Activated naive CD4-positive, alpha-beta T cell treated with anti-CD3 and anti-CD28 coated beads for 36 hours (primary cell): ENCODE measurements at regions of chr2 and their contacts with region 1.

Region 1: GRCh38 chr2:203453858-203454451 is 81.1 kb downstream of the RAPH1 start:
- DNase-seq: peak; percentile 54
- H3K4me3 Mint-ChIP-seq: no peak overlapping the region
- H3K27ac Mint-ChIP-seq: no peak overlapping the region
- H3K4me1 Mint-ChIP-seq: peaks cover 2% of the 10 kb centered on the region
- H3K27me3 Mint-ChIP-seq: no peaks in the 10 kb centered on the region

Region 2: GRCh38 chr2:202577250-202578183 is 876.4 kb before region 1 on chr2:
- CTCF ChIA-PET with region 1: no interaction called
- intact Hi-C with region 1: loop called (anchors 1 kb)
- DNase-seq: no peak
- H3K4me3 Mint-ChIP-seq: no peak overlapping the region
- H3K27ac Mint-ChIP-seq: no peak overlapping the region
- H3K4me1 Mint-ChIP-seq: peaks cover 2% of the 10 kb centered on the region
- H3K27me3 Mint-ChIP-seq: no peaks in the 10 kb centered on the region

Region 3: DNA sequence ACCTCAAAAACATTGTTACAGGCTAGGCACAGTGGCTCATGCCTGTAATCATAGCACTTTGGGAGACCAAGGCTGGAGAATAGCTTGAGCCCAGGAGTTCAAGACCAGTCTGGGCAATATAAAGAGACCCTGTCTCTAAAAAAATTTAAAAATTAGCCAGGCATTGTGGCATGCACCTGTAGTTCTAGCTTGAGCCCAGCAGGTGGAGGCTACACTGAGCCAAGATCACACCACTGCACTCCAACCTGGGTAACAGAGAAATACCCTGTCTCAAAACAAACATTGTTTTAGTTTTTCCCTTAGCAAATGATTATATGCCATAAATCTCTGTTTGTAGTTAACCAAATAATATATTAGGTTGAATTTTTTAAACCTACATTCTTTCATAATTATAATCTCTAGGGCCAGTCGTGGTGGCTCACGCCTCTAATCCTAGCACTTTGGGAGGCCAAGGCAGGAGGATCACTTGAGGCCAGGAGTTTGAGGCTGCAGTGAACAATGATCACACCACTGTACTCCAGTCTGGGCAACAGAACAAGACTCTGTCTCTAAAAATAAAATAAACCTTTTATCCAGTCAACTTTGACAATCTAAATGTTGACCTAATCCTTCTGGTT is 228.4 kb before region 1 on chr2:
- CTCF ChIA-PET with region 1: interaction called, 4 read pairs
- intact Hi-C with region 1: loop called (anchors 1 kb)
- DNase-seq: peak; percentile 43
- H3K4me3 Mint-ChIP-seq: no peak overlapping the region
- H3K27ac Mint-ChIP-seq: no peak overlapping the region
- H3K4me1 Mint-ChIP-seq: no peaks in the 10 kb centered on the region
- H3K27me3 Mint-ChIP-seq: peaks cover 3% of the 10 kb centered on the region

Region 4: DNA sequence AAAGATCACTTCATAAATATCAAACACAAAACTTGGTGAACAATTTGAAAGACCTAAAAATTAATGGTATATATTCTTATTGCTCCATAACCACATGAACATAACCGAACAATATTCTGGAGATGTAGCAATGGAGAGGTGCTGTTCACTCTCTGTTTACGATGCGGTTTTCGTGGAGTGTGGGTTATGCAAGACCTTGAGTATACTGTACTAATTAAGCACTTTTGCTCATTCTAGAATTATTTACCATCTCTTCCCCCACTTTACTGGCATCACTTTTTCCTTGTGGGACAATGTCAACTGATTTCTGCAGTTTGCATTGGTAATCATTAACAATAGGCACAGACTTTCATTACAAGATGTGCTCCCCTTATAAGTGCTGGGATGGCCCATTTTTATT is 16.4 kb before region 1 on chr2:
- CTCF ChIA-PET with region 1: interaction called, 11 read pairs
- intact Hi-C with region 1: no loop called
- DNase-seq: no peak
- H3K4me3 Mint-ChIP-seq: no peak overlapping the region
- H3K27ac Mint-ChIP-seq: no peak overlapping the region
- H3K4me1 Mint-ChIP-seq: no peaks in the 10 kb centered on the region
- H3K27me3 Mint-ChIP-seq: no peaks in the 10 kb centered on the region